ENCODE measurements at regions of chr13 and their contacts with region 1.

Region 1: DNA sequence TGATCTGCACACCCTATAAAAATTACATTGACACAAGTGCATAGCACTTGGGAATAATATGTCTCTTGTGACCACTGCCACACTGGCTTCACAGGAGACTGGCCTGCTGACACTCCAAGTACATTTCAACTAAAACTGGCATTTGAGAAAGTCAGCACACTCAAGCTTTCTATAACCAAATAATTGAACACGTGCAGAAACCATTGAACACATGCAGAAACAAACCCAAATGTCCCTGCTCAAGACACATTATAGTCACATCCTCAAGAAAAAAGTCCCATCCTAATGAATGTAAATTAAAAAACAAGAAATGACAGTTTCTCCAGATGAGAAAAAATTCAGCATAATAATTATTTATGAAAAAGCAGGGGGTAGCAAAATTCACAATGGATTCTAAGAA is 1859.1 kb upstream of the PCDH20 start:
- DNase-seq: no peak
- H3K4me3 ChIP-seq: no peak overlapping the region
- H3K4me3 Mint-ChIP-seq: no peak overlapping the region
- H3K27ac Mint-ChIP-seq: no peak overlapping the region
- H3K4me1 ChIP-seq: no peaks in the 10 kb centered on the region
- H3K4me1 Mint-ChIP-seq: no peaks in the 10 kb centered on the region
- H3K27me3 ChIP-seq: no peaks in the 10 kb centered on the region
- H3K27me3 Mint-ChIP-seq: no peaks in the 10 kb centered on the region
- CTCF ChIP-seq: no peak

Region 2: GRCh38 chr13:61700620-61701019 is 1574.2 kb before region 1 on chr13:
- CTCF ChIA-PET with region 1: no interaction called
- POLR2A ChIA-PET with region 1: no interaction called
- intact Hi-C with region 1: loop called (anchors 5 kb)
- DNase-seq: no peak
- H3K4me3 ChIP-seq: no peak overlapping the region
- H3K4me3 Mint-ChIP-seq: no peak overlapping the region
- H3K27ac Mint-ChIP-seq: no peak overlapping the region
- H3K4me1 ChIP-seq: no peaks in the 10 kb centered on the region
- H3K4me1 Mint-ChIP-seq: no peaks in the 10 kb centered on the region
- H3K27me3 ChIP-seq: no peaks in the 10 kb centered on the region
- H3K27me3 Mint-ChIP-seq: peaks cover 6% of the 10 kb centered on the region
- CTCF ChIP-seq: no peak

Region 3: DNA sequence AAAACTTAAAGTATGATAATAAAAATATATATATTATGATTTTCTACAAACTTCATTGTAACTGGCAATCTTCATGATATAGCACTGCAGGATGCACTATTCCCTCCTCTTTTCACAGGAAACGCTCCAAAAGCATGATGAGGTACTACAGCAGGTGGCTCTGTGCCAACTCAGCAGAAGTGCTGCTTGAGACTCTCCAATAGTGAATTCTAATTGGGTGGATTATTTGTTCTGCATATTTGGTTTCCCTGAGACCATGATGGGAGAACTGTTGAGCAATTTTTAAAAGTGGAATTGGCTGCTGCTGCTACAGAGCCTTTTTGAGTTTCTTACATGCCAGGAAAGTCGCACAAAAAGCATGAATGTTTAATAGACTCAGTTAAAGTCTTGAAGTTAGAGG is 76.7 kb before region 1 on chr13:
- CTCF ChIA-PET with region 1: no interaction called
- POLR2A ChIA-PET with region 1: no interaction called
- intact Hi-C with region 1: no loop called
- DNase-seq: no peak
- H3K4me3 ChIP-seq: no peak overlapping the region
- H3K4me3 Mint-ChIP-seq: no peak overlapping the region
- H3K27ac Mint-ChIP-seq: no peak overlapping the region
- H3K4me1 ChIP-seq: no peaks in the 10 kb centered on the region
- H3K4me1 Mint-ChIP-seq: no peaks in the 10 kb centered on the region
- H3K27me3 ChIP-seq: no peaks in the 10 kb centered on the region
- H3K27me3 Mint-ChIP-seq: no peaks in the 10 kb centered on the region
- CTCF ChIP-seq: no peak

Region 4: GRCh38 chr13:63337041-63337440 is 62.3 kb after region 1 on chr13:
- CTCF ChIA-PET with region 1: no interaction called
- POLR2A ChIA-PET with region 1: no interaction called
- intact Hi-C with region 1: no loop called
- DNase-seq: no peak
- H3K4me3 ChIP-seq: no peak overlapping the region
- H3K4me3 Mint-ChIP-seq: no peak overlapping the region
- H3K27ac Mint-ChIP-seq: no peak overlapping the region
- H3K4me1 ChIP-seq: no peaks in the 10 kb centered on the region
- H3K4me1 Mint-ChIP-seq: no peaks in the 10 kb centered on the region
- H3K27me3 ChIP-seq: no peaks in the 10 kb centered on the region
- H3K27me3 Mint-ChIP-seq: peaks cover 4% of the 10 kb centered on the region
- CTCF ChIP-seq: no peak